Activated CD8-positive, alpha-beta T cell treated with anti-CD3 and anti-CD28 coated beads for 36 hours (primary cell): ENCODE measurements at regions of chr5 and their contacts with region 1.

Region 1: DNA sequence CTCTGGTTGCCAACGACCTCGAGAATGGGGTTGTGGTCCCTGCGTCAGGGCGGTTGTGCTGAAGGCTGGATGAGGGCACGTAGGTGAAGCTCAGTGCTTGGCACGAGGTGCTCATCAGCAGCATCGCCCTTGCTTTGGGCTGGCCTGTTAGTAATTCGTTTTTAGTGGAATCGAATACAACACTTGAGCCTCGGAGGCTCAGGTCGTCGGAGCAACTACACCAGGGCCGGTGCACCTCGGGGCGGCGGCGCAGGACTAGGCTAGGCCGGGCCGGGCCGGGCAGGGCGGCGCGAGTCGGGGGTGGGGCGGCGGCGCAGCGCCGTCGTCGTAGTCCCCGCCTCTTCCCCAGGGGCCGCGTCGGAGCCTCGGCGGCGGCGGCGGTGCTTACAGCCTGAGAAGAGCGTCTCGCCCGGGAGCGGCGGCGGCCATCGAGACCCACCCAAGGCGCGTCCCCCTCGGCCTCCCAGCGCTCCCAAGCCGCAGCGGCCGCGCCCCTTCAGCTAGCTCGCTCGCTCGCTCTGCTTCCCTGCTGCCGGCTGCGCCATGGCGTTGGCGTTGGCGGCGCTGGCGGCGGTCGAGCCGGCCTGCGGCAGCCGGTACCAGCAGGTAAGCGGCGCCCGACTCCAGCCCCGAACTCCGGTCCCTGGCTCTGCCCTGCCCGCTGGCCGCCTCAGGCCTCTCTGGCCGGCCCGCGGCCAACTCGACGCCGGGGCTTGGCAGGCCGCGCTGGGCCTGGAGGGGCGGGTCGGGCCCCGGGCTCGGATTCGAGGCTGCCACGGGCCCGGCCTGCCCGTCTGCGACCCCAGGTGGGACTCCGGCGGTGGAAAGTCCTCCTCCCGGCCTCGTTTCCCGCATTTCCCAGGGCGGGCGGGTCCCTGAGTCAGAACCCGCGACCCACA is at the start of gene NDFIP1:
- DNase-seq: peak; percentile 88
- ATAC-seq: peak; percentile 84
- H3K4me3 Mint-ChIP-seq: peak within 1 kb of the TSS; percentile 93
- H3K27ac Mint-ChIP-seq: peak within 1 kb of the TSS; percentile 96
- H3K4me1 Mint-ChIP-seq: peaks cover 65% of the 10 kb centered on the region
- H3K27me3 Mint-ChIP-seq: no peaks in the 10 kb centered on the region
- CTCF ChIP-seq: no peak
- total RNA-seq, gene NDFIP1: 93.8 to 96.9 TPM

Region 2: GRCh38 chr5:142073362-142073988 is 35.2 kb before region 1 on chr5:
- CTCF ChIA-PET with region 1: no interaction called
- POLR2A ChIA-PET with region 1: interaction called, 4 read pairs
- intact Hi-C with region 1: loop called (anchors 2 kb)
- DNase-seq: no peak
- ATAC-seq: peak; percentile 37
- H3K4me3 Mint-ChIP-seq: no peak overlapping the region
- H3K27ac Mint-ChIP-seq: peak overlapping the region; percentile 49
- H3K4me1 Mint-ChIP-seq: peaks cover 42% of the 10 kb centered on the region
- H3K27me3 Mint-ChIP-seq: no peaks in the 10 kb centered on the region
- CTCF ChIP-seq: no peak

Region 3: DNA sequence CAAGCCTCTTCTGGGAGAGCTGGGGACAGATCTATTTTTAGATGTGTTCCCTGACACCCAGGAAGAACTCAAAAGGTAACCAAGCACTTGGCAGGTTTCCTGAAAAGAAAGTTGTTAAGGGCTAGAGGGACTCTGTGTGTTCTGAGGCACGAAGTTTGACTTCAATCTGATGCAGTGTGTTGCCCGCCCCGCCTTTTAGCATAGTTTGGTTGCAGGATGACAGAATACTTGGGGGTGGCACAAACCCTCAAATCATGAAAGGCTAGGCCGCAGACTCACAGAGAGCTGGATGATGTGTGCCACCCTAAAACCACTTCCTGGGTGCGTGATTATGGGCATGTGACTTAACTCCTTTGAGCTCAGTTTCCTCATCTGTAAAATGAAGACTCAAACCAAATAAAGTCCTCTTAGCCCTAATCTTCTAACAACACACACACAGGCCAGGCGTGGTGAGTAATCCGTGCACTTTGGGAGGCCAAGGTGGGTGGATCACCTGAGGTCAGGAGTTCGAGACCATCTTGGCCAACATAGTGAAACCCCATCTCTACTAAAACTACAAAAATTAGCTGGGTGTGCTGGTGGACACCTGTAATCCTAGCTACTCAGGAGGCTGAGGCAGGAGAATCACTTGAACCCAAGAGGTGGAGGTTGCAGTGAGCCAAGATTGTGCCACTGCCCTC is 12.9 kb before region 1 on chr5:
- CTCF ChIA-PET with region 1: interaction called, 12 read pairs
- POLR2A ChIA-PET with region 1: interaction called, 39 read pairs
- intact Hi-C with region 1: no loop called
- DNase-seq: peak; percentile 97
- ATAC-seq: peak; percentile 88
- H3K4me3 Mint-ChIP-seq: peak overlapping the region; percentile 51
- H3K27ac Mint-ChIP-seq: peak overlapping the region; percentile 93
- H3K4me1 Mint-ChIP-seq: peaks cover 78% of the 10 kb centered on the region
- H3K27me3 Mint-ChIP-seq: no peaks in the 10 kb centered on the region
- CTCF ChIP-seq: no peak